WTC11 (cell line): ENCODE measurements at regions of chr11 and their contacts with region 1.

Region 1: GRCh38 chr11:59171508-59172322 is at the start of gene DTX4:
- DNase-seq: peak; percentile 96
- ATAC-seq: peak; percentile 58
- H3K4me3 Mint-ChIP-seq: peak within 1 kb of the TSS; percentile 90
- H3K27ac Mint-ChIP-seq: no peak within 1 kb of the TSS
- H3K4me1 Mint-ChIP-seq: peaks cover 26% of the 10 kb centered on the region
- H3K27me3 Mint-ChIP-seq: peaks cover 4% of the 10 kb centered on the region; the same call in 1 of the 2 replicates
- CTCF ChIP-seq: peak; percentile 83
- total RNA-seq, gene DTX4: 12.3 to 15.5 TPM (median 12.8 TPM) in 3 replicates

Region 2: GRCh38 chr11:59135648-59136461 is 35.9 kb before region 1 on chr11:
- CTCF ChIA-PET with region 1: interaction called, 10 read pairs
- POLR2A ChIA-PET with region 1: no interaction called
- DNase-seq: peak; percentile 93
- ATAC-seq: peak; percentile 100
- H3K4me3 Mint-ChIP-seq: peak overlapping the region; percentile 59
- H3K27ac Mint-ChIP-seq: no peak overlapping the region
- H3K4me1 Mint-ChIP-seq: peaks cover 2% of the 10 kb centered on the region; the same call in 1 of the 2 replicates
- H3K27me3 Mint-ChIP-seq: peaks cover 6% of the 10 kb centered on the region; the same call in 1 of the 2 replicates
- CTCF ChIP-seq: peak; percentile 92

Region 3: GRCh38 chr11:59186130-59186594 is 14.4 kb after region 1 on chr11:
- CTCF ChIA-PET with region 1: interaction called, 382 read pairs
- POLR2A ChIA-PET with region 1: interaction called, 8 read pairs
- DNase-seq: peak; percentile 68
- ATAC-seq: peak; percentile 78
- H3K4me3 Mint-ChIP-seq: no peak overlapping the region
- H3K27ac Mint-ChIP-seq: no peak overlapping the region
- H3K4me1 Mint-ChIP-seq: peaks cover 16% of the 10 kb centered on the region
- H3K27me3 Mint-ChIP-seq: no peaks in the 10 kb centered on the region
- CTCF ChIP-seq: peak; percentile 65

Region 4: DNA sequence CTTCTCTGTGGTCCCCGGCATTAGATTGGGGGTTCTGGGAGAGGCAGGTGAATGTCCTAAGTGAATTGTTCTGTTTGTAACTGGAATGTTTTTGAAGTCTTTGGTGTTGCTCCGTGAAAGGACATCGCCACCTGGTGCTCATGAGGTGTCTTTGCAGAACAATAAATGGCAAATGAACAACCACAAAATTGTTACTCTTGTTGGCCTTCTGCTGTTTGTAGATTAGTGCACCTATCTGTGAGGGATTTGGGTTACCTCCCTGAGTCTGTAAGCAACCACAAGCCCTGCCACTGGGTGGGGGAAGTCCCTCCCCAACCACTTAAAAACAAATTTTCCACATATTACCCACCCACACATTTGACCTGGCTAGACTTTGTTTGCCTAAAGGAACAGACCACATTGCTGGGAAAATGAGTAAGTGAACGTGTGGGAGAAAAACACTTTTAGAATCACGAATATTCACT is 36.3 kb after region 1 on chr11:
- CTCF ChIA-PET with region 1: interaction called, 20 read pairs
- POLR2A ChIA-PET with region 1: no interaction called
- DNase-seq: peak; percentile 15
- ATAC-seq: peak; percentile 47
- H3K4me3 Mint-ChIP-seq: no peak overlapping the region
- H3K27ac Mint-ChIP-seq: 0 out of 2 replicates have a peak overlapping the region, but pooled peaks have one; percentile 76
- H3K4me1 Mint-ChIP-seq: peaks cover 6% of the 10 kb centered on the region
- H3K27me3 Mint-ChIP-seq: no peaks in the 10 kb centered on the region; the same call in 1 of the 2 replicates
- CTCF ChIP-seq: peak; percentile 53

Region 5: DNA sequence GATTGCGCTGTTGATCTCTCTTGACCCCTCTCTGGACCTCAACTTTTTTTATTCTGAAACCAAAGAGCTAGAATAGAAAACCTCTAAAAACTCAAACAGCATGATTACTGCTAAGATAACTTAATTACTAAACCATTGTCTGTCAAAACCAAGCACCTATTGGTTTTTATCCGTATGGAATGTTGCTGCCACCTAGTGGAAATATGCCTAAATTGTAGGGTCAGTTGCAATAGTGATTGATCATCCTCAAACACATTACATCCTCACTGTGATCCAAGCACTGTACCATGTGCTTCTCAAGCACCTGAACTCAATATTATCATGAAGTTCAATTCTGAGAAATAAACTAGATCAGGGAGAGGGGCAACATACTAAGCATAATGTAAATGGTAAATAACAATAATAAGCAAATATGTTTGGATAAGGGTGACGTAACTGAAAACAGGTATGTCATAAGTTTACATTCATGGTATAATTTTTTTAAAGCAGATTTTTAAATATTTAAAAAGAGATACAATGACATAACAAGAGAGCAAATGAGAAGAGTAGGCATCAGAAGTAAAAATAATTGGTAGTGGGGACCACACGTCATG is 258.3 kb after region 1 on chr11:
- CTCF ChIA-PET with region 1: interaction called, 19 read pairs
- POLR2A ChIA-PET with region 1: no interaction called
- DNase-seq: peak; percentile 18
- ATAC-seq: peak; percentile 58; the same call in 1 of the 2 replicates
- H3K4me3 Mint-ChIP-seq: no peak overlapping the region
- H3K27ac Mint-ChIP-seq: no peak overlapping the region
- H3K4me1 Mint-ChIP-seq: peaks cover 24% of the 10 kb centered on the region
- H3K27me3 Mint-ChIP-seq: no peaks in the 10 kb centered on the region
- CTCF ChIP-seq: peak; percentile 82